MCF 10A (cell line): ENCODE measurements at regions of chr4 and their contacts with region 1.

Region 1: GRCh38 chr4:188021548-188022249 is 26.1 kb downstream of the ZFP42 start:
- DNase-seq: no peak
- H3K4me3 Mint-ChIP-seq: no peak overlapping the region
- H3K27ac Mint-ChIP-seq: peak overlapping the region; percentile 78
- H3K4me1 Mint-ChIP-seq: peaks cover 31% of the 10 kb centered on the region
- H3K27me3 Mint-ChIP-seq: no peaks in the 10 kb centered on the region
- CTCF ChIP-seq: no peak

Region 2: GRCh38 chr4:187606581-187606980 is 415.1 kb before region 1 on chr4:
- CTCF ChIA-PET with region 1: interaction called, 4 read pairs
- POLR2A ChIA-PET with region 1: no interaction called
- intact Hi-C with region 1: loop called (anchors 10 kb)
- DNase-seq: peak; percentile 71
- H3K4me3 Mint-ChIP-seq: no peak overlapping the region
- H3K27ac Mint-ChIP-seq: no peak overlapping the region
- H3K4me1 Mint-ChIP-seq: peaks cover 25% of the 10 kb centered on the region
- H3K27me3 Mint-ChIP-seq: no peaks in the 10 kb centered on the region
- CTCF ChIP-seq: peak; percentile 90

Region 3: GRCh38 chr4:187908079-187908561 is 113.6 kb before region 1 on chr4:
- CTCF ChIA-PET with region 1: no interaction called
- POLR2A ChIA-PET with region 1: no interaction called
- intact Hi-C with region 1: loop called (anchors 1 kb)
- DNase-seq: peak; percentile 75
- H3K4me3 Mint-ChIP-seq: no peak overlapping the region
- H3K27ac Mint-ChIP-seq: peak overlapping the region; percentile 94
- H3K4me1 Mint-ChIP-seq: peaks cover 14% of the 10 kb centered on the region
- H3K27me3 Mint-ChIP-seq: no peaks in the 10 kb centered on the region
- CTCF ChIP-seq: no peak

Region 4: DNA sequence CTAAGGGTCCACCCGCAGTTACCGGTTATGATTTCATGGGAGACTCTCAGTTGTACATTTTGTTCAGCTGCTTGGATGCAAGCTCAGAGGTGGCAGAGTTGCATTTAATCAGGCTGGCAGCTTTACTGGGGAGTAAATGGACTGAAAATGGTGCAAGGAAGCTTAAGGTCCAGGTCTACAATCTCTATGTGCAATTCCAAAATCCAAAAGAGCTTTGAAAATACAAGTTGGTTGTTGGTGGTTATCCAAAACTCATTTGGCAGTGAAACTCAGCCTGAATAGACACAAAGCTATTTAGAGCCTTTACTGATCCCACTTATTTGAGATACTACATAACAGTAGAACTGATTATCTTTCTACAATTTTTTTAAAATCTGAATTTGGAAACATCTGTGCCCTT is 38.0 kb before region 1 on chr4:
- CTCF ChIA-PET with region 1: no interaction called
- POLR2A ChIA-PET with region 1: no interaction called
- intact Hi-C with region 1: no loop called
- DNase-seq: no peak
- H3K4me3 Mint-ChIP-seq: no peak overlapping the region
- H3K27ac Mint-ChIP-seq: no peak overlapping the region
- H3K4me1 Mint-ChIP-seq: no peaks in the 10 kb centered on the region
- H3K27me3 Mint-ChIP-seq: no peaks in the 10 kb centered on the region
- CTCF ChIP-seq: no peak

Region 5: GRCh38 chr4:188107931-188108843 is 86.5 kb after region 1 on chr4:
- CTCF ChIA-PET with region 1: interaction called, 3 read pairs
- POLR2A ChIA-PET with region 1: no interaction called
- intact Hi-C with region 1: loop called (anchors 5 kb)
- DNase-seq: peak; percentile 57
- H3K4me3 Mint-ChIP-seq: peak overlapping the region; percentile 57
- H3K27ac Mint-ChIP-seq: peak overlapping the region; percentile 86
- H3K4me1 Mint-ChIP-seq: peaks cover 41% of the 10 kb centered on the region
- H3K27me3 Mint-ChIP-seq: no peaks in the 10 kb centered on the region
- CTCF ChIP-seq: no peak

Region 6: GRCh38 chr4:188177997-188178675 is 156.4 kb after region 1 on chr4:
- CTCF ChIA-PET with region 1: no interaction called
- POLR2A ChIA-PET with region 1: interaction called, 4 read pairs
- intact Hi-C with region 1: loop called (anchors 1 kb)
- DNase-seq: peak; percentile 78
- H3K4me3 Mint-ChIP-seq: no peak overlapping the region
- H3K27ac Mint-ChIP-seq: no peak overlapping the region
- H3K4me1 Mint-ChIP-seq: peaks cover 25% of the 10 kb centered on the region
- H3K27me3 Mint-ChIP-seq: no peaks in the 10 kb centered on the region
- CTCF ChIP-seq: no peak